IMR-90 (cell line): ENCODE measurements at regions of chr11 and their contacts with region 1.

Region 1: DNA sequence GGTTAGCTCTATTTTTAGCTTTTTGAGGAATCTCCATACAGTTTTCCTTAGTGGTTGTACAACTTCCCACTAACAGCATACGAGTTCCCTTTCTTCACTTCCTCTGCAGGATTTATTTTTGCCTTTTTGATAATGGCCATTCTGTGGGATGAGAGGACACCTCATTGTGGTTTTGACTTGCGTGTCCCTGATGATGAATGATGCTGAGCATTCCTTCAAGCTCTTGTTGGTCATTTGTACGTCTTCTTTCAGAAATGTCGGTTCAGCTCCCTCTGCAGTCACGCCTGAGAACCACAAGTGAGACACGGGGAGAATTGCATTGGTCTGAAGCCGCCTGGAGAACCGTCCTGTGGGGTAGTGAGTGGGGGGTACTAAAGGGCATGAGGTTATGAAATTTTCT is 2.0 kb upstream of the KRTAP5-10 start:
- DNase-seq: peak; percentile 62
- ATAC-seq: peak; percentile 80
- H3K4me3 ChIP-seq: no peak overlapping the region
- H3K27ac ChIP-seq: no peak overlapping the region
- H3K4me1 ChIP-seq: no peaks in the 10 kb centered on the region
- H3K27me3 ChIP-seq: peaks cover 12% of the 10 kb centered on the region
- CTCF ChIP-seq: peak; percentile 40
- POLR2A ChIP-seq: no peak
- RAD21 ChIP-seq: peak; percentile 42

Region 2: GRCh38 chr11:71525938-71526495 is 37.4 kb before region 1 on chr11:
- CTCF ChIA-PET with region 1: no interaction called
- POLR2A ChIA-PET with region 1: no interaction called
- dilution Hi-C with region 1: no loop called
- in situ Hi-C with region 1: no loop called
- intact Hi-C with region 1: loop called (anchors 1 kb)
- DNase-seq: no peak
- ATAC-seq: no peak
- H3K4me3 ChIP-seq: no peak overlapping the region
- H3K27ac ChIP-seq: no peak overlapping the region
- H3K4me1 ChIP-seq: no peaks in the 10 kb centered on the region
- H3K27me3 ChIP-seq: 0 out of 2 replicates have a peak, but pooled peaks cover 1% of the 10 kb centered on the region
- CTCF ChIP-seq: no peak
- POLR2A ChIP-seq: no peak
- RAD21 ChIP-seq: no peak

Region 3: DNA sequence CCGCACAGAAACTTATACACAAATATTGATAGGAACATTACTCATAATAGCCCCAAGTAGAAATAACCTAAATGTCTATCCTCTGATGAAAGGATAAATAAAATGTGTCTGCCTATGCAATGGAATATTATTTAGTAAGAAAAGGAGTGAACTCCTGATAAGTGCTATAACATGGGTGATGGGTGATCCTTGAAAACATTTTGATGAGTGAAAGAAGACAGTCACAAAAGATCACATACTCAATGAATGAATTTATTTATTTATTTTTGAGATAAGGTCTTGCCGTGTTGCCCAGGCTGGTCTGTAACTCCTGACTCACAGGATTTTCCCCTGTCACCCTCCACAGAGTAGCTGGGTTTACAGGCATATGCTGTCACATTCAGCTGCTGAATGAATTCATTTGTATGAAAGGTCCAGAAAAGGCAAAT is 382.8 kb after region 1 on chr11:
- CTCF ChIA-PET with region 1: no interaction called
- POLR2A ChIA-PET with region 1: no interaction called
- dilution Hi-C with region 1: no loop called
- in situ Hi-C with region 1: no loop called
- intact Hi-C with region 1: no loop called
- DNase-seq: peak; percentile 78
- ATAC-seq: peak; percentile 53
- H3K4me3 ChIP-seq: no peak overlapping the region
- H3K27ac ChIP-seq: no peak overlapping the region
- H3K4me1 ChIP-seq: peaks cover 11% of the 10 kb centered on the region
- H3K27me3 ChIP-seq: no peaks in the 10 kb centered on the region
- CTCF ChIP-seq: no peak
- POLR2A ChIP-seq: no peak
- RAD21 ChIP-seq: no peak